ENCODE measurements at regions of chr16 and their contacts with region 1.

Region 1: DNA sequence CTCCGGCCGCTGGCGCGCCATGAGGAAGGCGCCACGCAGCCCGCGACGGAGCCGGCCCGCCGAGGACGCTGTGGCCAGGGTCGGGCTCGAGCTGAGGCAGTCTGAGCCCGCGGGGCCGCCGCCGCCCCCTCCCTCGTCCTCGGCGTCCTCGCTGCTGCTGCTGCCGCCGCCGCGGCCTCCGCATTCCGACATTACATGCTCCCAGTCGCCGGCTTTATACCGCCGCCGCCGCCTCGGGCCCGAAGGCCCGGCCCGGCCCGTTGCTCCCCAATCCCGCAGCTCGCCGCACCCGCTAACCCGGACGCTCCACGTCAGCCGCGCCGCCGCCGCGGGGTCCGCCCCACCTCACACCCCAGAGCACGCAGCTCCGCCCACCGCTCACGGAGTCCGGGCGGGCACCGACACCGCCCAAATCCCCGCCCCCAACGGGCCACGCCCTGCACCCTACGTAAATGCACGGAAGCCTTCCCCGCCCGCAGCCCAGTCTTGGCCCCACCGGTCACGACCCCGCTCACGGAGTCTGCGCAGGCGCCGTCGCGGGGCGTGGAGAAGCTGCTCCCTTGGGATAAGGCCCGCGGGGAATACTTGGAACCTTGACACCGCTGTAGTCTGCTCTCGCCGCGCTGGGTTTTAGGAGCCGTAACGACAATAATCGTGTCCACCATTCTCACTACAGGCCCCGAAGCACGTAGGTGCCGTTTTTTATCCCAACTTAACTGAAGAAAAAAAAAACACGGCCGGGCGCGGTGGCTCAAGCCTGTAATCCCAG is at the start of gene TXNDC11:
- DNase-seq: peak; percentile 99
- H3K4me3 ChIP-seq: peak within 1 kb of the TSS; percentile 78 to 94
- H3K27ac ChIP-seq: peak within 1 kb of the TSS; percentile 95
- H3K4me1 ChIP-seq: peaks cover 6% of the 10 kb centered on the region
- H3K27me3 ChIP-seq: no peaks in the 10 kb centered on the region
- CTCF ChIP-seq: peak in 1 of 4 experiments; percentile 5
- POLR2A ChIP-seq: peak; percentile 96
- total RNA-seq, gene TXNDC11: 75.0 to 96.9 TPM

Region 2: DNA sequence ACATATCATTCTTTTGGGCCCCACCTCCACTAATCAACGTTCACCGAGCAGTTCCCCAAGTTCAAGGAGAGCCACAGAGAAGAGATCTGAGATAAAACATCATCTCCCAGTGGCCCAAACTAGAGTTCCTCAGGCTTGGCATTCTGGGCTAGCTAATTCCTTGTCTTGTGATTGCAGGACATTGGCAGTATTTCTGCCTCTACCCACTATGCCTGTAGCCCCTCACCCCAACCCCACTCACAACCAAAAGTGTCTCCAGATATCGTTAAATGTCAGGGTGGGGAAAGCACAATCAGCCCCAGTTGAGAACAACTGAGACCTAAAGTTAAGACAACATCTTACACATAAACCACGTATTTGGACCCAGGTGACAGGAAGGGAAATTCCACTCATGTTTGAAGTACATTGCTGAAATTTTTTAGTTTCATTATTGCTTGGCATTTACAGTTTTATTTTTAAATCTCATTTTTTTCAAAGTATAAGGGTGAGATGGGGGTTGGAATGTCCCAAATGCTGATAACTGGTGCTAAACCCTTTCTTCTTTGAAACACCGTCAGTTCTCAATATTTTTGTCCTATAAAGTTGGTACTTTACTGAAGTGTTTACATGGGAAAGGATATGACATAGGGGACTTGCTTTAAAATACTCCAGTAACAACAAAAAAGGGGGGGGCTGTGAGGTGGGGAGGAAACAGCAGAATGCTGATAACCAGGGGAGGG is 40.8 kb after region 1 on chr16:
- intact Hi-C with region 1: loop called (anchors 5 kb)
- DNase-seq: no peak
- H3K4me3 ChIP-seq: no peak overlapping the region
- H3K27ac ChIP-seq: peak overlapping the region; percentile 81 to 84
- H3K4me1 ChIP-seq: peaks cover 12% of the 10 kb centered on the region
- H3K27me3 ChIP-seq: no peaks in the 10 kb centered on the region
- CTCF ChIP-seq: no peak
- POLR2A ChIP-seq: no peak

Region 3: DNA sequence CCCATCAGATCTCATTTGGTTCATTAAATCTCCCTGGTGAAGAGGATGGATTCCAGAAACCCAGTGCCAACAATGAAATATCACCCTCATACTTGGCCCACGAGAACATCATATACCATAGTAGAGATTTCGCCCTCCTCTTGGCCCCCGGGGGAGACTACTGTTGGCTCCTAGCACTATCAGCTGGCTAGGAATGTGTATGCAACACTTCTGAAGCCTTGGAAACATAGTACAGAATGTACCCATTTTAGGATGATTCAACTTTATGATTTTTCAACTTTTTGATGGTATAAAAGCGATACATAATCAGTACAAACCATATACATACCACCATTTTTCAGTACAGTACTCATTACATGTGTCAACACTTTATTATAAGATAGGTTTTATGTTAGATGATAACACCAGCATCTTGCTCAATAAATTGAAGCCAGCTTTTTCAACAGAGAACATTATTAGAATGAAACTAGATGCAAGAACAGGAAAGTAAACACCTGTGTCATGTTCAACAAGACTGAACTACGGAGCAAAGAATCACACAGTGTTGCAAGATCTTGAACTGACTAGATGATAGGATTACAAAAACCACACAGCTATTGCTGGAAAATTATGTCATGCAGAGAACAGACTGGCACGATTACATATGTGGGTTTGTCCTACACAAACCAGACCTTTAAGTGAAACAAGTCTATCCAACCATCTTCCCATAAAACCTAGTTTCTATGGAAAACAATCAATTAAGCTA is 91.4 kb after region 1 on chr16:
- intact Hi-C with region 1: no loop called
- DNase-seq: no peak
- H3K4me3 ChIP-seq: no peak overlapping the region
- H3K27ac ChIP-seq: no peak overlapping the region
- H3K4me1 ChIP-seq: no peaks in the 10 kb centered on the region
- H3K27me3 ChIP-seq: no peaks in the 10 kb centered on the region
- CTCF ChIP-seq: no peak
- POLR2A ChIP-seq: no peak

Region 4: DNA sequence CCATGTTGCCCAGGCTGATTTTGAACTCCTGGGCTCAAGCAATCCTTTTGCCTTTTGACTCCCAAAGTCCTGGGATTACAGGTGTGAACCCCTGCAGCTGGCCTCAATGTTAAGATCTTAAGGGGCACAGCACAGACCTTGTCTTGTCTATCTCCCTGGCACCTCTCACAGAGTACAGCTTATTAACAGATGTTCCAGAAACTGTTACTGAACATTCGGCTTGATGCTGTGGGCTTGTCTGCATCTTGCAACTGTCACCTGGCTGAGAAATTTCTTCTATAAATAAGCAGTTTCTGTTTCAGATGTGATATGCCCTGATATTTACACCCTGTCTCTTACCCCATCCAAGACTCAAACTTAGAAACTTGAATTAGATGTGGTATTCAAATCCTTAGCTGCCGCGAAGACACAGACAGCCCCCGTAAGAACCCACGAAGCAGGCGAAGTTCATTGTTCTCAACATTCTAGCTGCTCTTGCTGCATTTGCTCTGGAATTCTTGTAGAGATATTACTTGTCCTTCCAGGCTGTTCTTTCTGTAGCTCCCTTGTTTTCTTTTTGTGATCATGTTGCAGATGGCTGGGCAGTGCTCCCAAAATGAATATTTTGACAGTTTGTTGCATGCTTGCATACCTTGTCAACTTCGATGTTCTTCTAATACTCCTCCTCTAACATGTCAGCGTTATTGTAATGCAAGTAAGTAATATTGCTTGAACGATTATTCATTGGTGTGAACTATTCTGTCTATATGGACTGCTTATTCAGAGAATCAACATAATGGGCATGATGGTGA is 222.2 kb after region 1 on chr16 and contains the start of gene TNFRSF17:
- intact Hi-C with region 1: no loop called
- DNase-seq: no peak
- H3K4me3 ChIP-seq: no peak within 1 kb of the TSS
- H3K27ac ChIP-seq: no peak within 1 kb of the TSS
- H3K4me1 ChIP-seq: peaks cover 3% of the 10 kb centered on the region
- H3K27me3 ChIP-seq: no peaks in the 10 kb centered on the region
- CTCF ChIP-seq: no peak
- POLR2A ChIP-seq: no peak
- total RNA-seq, gene TNFRSF17: 1.0 TPM in 1 of 2 donors, not detected in the other

Measured in prostate gland (tissue), 2 donors.